Thyroid gland (tissue), 4 donors: ENCODE measurements at regions of chr16 and their contacts with region 1.

Region 1: DNA sequence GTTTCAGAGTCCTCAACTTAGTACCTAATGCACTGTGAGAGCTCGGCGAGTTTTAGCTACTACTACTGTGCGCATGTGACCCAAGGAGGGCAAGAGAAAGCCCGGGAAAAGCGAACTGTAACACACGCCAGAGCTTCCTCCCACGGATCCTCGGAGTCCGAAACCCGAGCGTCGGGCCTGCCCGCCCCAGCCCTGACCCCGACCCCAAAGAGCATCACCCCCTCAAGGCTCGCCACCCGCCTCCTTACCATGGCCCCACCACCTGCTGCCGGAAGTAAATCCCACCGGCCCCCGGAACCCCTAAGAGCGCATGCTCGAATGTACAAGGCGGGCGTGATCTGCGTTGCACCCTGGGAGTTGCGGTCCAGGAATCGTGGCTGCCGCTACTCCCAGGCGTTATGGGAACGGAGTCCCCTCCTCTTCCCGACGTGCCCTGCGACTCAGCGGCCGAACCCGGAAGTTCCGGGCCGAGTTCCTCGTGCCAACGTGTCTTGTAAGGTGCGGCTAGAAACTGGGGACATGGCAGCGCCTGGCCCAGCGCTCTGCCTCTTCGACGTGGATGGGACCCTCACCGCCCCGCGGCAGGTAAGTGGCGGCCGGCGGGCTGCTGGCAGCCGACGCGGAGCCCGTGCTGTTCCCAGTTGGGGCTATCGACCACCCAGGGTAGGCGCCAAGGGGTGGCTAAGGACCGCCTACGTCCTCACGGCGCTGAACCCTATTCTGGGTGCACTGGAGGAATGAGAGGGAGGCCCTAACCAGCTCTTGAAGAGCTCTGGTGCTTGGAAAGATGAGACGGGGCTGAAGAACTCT is at the starts of genes PMM2 and TMEM186:
- DNase-seq: peak; percentile 97 to 98
- H3K4me3 ChIP-seq: peak within 1 kb of the TSS; percentile 72 to 88 (median 80)
- H3K27ac ChIP-seq: peak within 1 kb of the TSS in 2 of 3 donors; percentile 52 to 69
- H3K4me1 ChIP-seq: peaks cover 19 to 28% of the 10 kb centered on the region in 2 donors
- H3K27me3 ChIP-seq: no peaks in the 10 kb centered on the region
- CTCF ChIP-seq: peak in 1 of 6 experiments; percentile 30
- POLR2A ChIP-seq: peak in 1 of 2 donors; percentile 48
- total RNA-seq, gene PMM2: 26.2 to 49.6 (median 30.8) TPM
- total RNA-seq, gene TMEM186: 6.6 to 9.2 (median 8.2) TPM

Region 2: DNA sequence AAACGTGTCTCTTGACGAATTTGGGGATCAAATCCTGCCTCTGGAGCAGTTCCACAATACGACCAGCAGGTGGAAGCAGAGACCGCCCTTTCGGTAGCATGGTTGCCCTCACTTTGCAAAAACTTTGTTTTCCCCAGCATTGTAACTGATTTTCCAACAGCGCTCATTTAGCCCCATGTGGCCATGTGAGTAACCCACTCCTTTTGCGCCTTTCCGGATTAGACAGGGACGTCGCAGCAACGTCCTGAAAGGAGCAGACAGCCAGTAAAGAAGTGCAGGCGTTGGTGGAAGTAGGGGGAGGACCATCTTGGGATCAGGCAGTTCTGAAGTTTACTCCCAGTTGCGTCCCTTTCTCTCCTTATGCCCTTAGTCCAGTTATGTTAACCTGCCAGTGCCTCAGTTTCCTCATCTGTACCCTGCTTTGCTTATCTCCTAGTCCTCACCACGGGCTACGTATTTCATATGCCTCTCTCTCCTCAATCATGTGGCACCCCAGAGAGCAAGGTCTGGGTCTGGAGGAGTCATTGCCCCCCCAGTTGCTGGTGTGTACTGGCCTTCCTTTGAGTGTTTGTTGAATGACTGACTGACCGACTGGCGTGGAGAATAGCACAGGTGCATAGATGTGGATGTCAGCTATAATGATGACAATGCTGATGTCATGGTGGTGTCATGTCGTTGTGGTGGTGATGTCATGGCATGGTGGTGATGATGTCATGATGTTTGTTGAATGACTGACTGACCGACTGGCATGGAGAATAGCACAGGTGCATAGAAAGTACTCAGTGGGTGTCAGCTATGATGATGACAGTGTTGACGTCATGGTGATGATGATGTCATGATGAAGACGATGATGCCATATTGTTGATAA is 229.6 kb before region 1 on chr16:
- intact Hi-C with region 1: loop called (anchors 10 kb)
- DNase-seq: peak; percentile 65 to 71
- H3K4me3 ChIP-seq: no peak overlapping the region
- H3K27ac ChIP-seq: no peak overlapping the region
- H3K4me1 ChIP-seq: peaks cover 0 to 3% of the 10 kb centered on the region in 2 donors
- H3K27me3 ChIP-seq: no peaks in the 10 kb centered on the region
- CTCF ChIP-seq: peak; percentile 93 to 99 (median 98)
- POLR2A ChIP-seq: no peak

Region 3: GRCh38 chr16:8655184-8655717 is 142.3 kb before region 1 on chr16:
- intact Hi-C with region 1: loop called (anchors 5 kb)
- DNase-seq: no peak
- H3K4me3 ChIP-seq: no peak overlapping the region
- H3K27ac ChIP-seq: no peak overlapping the region
- H3K4me1 ChIP-seq: no peaks in the 10 kb centered on the region
- H3K27me3 ChIP-seq: no peaks in the 10 kb centered on the region
- CTCF ChIP-seq: peak in 2 of 6 experiments; percentile 12 to 28
- POLR2A ChIP-seq: no peak

Region 4: DNA sequence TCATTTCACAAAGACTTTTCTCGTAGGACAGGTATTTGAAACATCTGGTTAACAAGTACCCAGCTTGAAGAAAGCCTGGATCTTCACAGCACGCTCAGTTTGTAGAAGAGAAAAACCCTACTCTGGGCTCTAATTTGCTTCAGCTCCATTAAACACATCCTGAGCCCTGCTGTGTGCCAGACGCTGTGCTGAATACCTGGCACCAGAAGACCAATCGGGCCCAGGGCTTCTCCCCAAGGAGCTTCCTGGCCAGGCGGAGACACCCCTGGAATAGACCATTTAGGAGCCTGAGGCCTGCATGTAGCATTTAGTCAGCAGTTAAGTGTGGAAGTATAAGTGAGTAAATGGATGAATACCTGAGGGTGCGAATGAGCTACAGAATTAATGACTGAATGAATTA is 132.0 kb before region 1 on chr16:
- intact Hi-C with region 1: loop called (anchors 5 kb)
- DNase-seq: no peak
- H3K4me3 ChIP-seq: no peak overlapping the region
- H3K27ac ChIP-seq: peak overlapping the region in 2 of 3 donors; percentile 61
- H3K4me1 ChIP-seq: peaks cover 16 to 35% of the 10 kb centered on the region in 2 donors
- H3K27me3 ChIP-seq: no peaks in the 10 kb centered on the region
- CTCF ChIP-seq: no peak
- POLR2A ChIP-seq: no peak

Region 5: GRCh38 chr16:8878521-8878911 is 80.9 kb after region 1 on chr16:
- intact Hi-C with region 1: loop called (anchors 5 kb)
- DNase-seq: no peak
- H3K4me3 ChIP-seq: no peak overlapping the region
- H3K27ac ChIP-seq: no peak overlapping the region
- H3K4me1 ChIP-seq: peaks cover 0 to 4% of the 10 kb centered on the region in 2 donors
- H3K27me3 ChIP-seq: no peaks in the 10 kb centered on the region
- CTCF ChIP-seq: no peak
- POLR2A ChIP-seq: no peak

Region 6: GRCh38 chr16:8928467-8928957 is 130.9 kb after region 1 on chr16:
- intact Hi-C with region 1: no loop called
- DNase-seq: no peak
- H3K4me3 ChIP-seq: no peak overlapping the region
- H3K27ac ChIP-seq: no peak overlapping the region
- H3K4me1 ChIP-seq: peaks cover 6 to 10% of the 10 kb centered on the region in 2 donors
- H3K27me3 ChIP-seq: no peaks in the 10 kb centered on the region
- CTCF ChIP-seq: no peak
- POLR2A ChIP-seq: no peak